ENCODE measurements at regions of chr15 and their contacts with region 1.

Region 1: GRCh38 chr15:68559345-68560310 is 19.2 kb upstream of the CORO2B start:
- DNase-seq: peak; percentile 87
- ATAC-seq: peak; percentile 94 to 96
- H3K4me3 ChIP-seq: peak overlapping the region; percentile 52
- H3K27ac ChIP-seq: no peak overlapping the region
- H3K4me1 ChIP-seq: peaks cover 14% of the 10 kb centered on the region
- H3K27me3 ChIP-seq: peaks cover 45% of the 10 kb centered on the region
- CTCF ChIP-seq: peak; percentile 99

Region 2: GRCh38 chr15:68447209-68447608 is 112.4 kb before region 1 on chr15:
- intact Hi-C with region 1: no loop called
- DNase-seq: no peak
- ATAC-seq: no peak
- H3K4me3 ChIP-seq: no peak overlapping the region
- H3K27ac ChIP-seq: no peak overlapping the region
- H3K4me1 ChIP-seq: no peaks in the 10 kb centered on the region
- H3K27me3 ChIP-seq: no peaks in the 10 kb centered on the region
- CTCF ChIP-seq: no peak

Region 3: DNA sequence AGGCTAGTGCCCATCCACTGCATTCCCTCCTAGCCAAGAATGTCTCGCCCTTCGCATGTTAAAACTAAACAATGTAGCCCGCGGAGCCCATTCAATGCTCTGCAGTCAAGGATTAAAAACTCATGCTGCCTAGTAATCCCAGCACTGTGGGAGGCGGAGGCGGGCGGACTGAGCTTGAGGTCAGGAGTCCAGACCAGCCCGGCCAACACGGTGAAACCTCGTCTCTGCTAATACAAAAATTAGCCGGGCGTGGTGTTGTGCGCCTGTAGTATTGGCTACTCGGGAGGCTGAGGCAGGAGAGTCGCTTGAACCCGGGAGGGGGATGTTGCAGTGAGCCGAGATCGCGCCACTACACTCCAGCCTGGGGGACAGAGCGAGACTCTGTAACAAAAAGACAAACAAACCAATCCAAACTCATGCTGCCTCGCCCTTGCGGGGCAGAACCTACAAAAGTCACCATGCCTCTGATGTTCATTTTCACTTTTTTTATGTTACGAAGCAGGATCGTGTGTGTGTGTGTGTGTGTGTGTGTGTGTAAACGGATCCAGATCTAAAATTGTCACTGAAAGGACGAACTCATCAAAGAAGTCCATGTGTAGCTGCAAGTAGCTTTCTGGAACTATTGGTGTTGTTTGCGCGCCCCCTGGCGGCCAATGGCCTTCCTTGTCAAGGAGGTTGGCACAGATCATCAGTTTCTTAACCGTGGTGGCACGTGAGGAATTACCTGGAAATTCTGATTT is 315.9 kb after region 1 on chr15:
- intact Hi-C with region 1: loop called (anchors 10 kb)
- DNase-seq: peak; percentile 94
- ATAC-seq: peak; percentile 93 to 94
- H3K4me3 ChIP-seq: peak overlapping the region; percentile 37
- H3K27ac ChIP-seq: no peak overlapping the region
- H3K4me1 ChIP-seq: peaks cover 7% of the 10 kb centered on the region
- H3K27me3 ChIP-seq: peaks cover 12% of the 10 kb centered on the region
- CTCF ChIP-seq: peak; percentile 88

Measured in lower lobe of right lung (tissue), 2 donors.